ENCODE measurements at regions of chr11 and their contacts with region 1.

Region 1: DNA sequence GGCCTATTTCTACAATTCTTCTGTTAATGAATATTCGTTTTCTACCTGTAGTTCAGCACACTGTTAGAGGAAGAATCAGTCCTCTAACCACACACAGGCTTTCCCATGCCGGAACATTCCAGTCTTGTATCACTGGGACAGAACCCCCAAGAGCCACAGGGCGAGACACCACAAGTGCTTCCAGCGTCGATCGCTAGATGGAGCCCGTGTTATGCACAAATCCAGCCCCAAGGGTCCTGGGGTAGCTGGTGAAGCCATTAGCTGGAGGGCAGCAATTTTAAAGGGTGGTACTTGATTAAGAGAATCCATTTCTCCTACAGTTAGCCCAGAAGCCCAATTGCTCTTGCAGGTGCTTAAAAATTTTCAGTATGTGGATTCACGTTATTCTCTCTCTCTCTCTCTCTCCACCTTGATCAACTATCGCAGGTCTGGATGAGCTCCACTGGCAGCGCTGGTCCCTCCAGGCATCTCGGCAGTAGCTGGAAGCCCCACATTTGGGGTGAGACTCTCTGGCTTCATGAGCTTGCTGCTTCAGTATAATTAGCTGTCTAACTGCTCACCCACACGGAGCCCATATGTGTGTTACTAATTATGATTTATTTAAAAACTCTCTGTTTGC is 148.2 kb upstream of the SNX19 start:
- DNase-seq: peak; percentile 45
- ATAC-seq: peak; percentile 90
- H3K4me3 ChIP-seq: no peak overlapping the region
- H3K27ac ChIP-seq: no peak overlapping the region
- H3K4me1 ChIP-seq: no peaks in the 10 kb centered on the region
- H3K27me3 ChIP-seq: peaks cover 22% of the 10 kb centered on the region
- CTCF ChIP-seq: peak; percentile 95

Region 2: DNA sequence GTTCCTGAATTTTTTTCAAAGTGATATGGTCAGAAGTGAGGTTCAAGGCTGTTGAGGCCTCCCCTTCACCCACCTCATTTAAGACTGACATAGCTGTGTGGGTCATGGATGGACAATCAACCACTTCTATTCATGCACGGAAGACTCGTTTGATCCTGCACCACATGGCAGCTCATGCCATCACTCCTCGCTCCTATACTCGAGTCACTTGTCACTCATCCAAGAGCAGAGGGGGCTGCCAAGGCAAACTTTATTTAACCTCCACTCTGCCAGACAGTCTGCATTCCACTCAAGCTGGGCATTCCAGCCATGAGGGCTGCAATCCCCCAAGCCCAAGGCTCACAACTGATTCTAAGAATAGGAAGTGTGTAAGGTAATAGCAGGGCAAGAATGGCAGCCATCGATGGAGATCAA is 182.3 kb before region 1 on chr11:
- CTCF ChIA-PET with region 1: no interaction called
- POLR2A ChIA-PET with region 1: no interaction called
- in situ Hi-C with region 1: no loop called
- intact Hi-C with region 1: no loop called
- DNase-seq: no peak
- ATAC-seq: no peak
- H3K4me3 ChIP-seq: no peak overlapping the region
- H3K27ac ChIP-seq: no peak overlapping the region
- H3K4me1 ChIP-seq: no peaks in the 10 kb centered on the region
- H3K27me3 ChIP-seq: no peaks in the 10 kb centered on the region
- CTCF ChIP-seq: no peak

Region 3: GRCh38 chr11:131217313-131218310 is 153.1 kb after region 1 on chr11:
- CTCF ChIA-PET with region 1: no interaction called
- POLR2A ChIA-PET with region 1: no interaction called
- in situ Hi-C with region 1: no loop called
- intact Hi-C with region 1: loop called (anchors 10 kb)
- DNase-seq: no peak
- ATAC-seq: no peak
- H3K4me3 ChIP-seq: no peak overlapping the region
- H3K27ac ChIP-seq: no peak overlapping the region
- H3K4me1 ChIP-seq: no peaks in the 10 kb centered on the region
- H3K27me3 ChIP-seq: peaks cover 6% of the 10 kb centered on the region; the same call in 1 of the 2 replicates
- CTCF ChIP-seq: peak; percentile 47

Region 4: DNA sequence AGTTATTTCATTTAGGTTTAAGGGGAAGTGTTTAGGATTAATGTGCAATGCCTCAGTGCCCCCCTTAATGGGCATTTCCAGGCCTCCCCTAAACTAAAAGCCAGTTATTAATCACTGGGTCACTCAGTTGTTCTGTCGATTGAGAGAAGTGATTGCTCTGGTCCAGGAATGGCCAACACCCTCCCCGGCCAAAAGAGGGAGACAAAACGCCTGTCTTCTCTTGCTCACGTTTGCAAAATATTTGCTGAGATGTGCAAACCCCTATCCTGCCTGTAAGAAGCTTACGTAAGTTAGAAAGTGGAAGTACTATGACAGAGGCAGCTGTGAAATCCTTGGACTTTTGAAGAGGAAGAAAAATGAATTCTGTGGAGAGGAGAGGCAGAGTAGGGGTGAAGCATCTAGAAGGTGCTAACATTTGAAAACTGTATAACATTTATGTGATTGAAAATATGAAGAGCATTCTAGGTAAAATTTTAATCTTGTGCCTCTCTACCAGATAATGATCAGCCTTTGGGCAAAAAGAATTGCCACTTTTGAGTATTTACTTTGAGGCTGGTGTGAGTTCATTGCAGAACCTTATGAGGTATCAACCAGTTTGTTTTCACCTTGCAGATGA is 343.7 kb after region 1 on chr11:
- CTCF ChIA-PET with region 1: no interaction called
- POLR2A ChIA-PET with region 1: no interaction called
- in situ Hi-C with region 1: no loop called
- intact Hi-C with region 1: loop called (anchors 10 kb)
- DNase-seq: peak; percentile 20
- ATAC-seq: peak; percentile 78
- H3K4me3 ChIP-seq: no peak overlapping the region
- H3K27ac ChIP-seq: no peak overlapping the region
- H3K4me1 ChIP-seq: no peaks in the 10 kb centered on the region
- H3K27me3 ChIP-seq: peaks cover 6% of the 10 kb centered on the region
- CTCF ChIP-seq: peak; percentile 81

Region 5: GRCh38 chr11:131511794-131512193 is 447.3 kb after region 1 on chr11:
- CTCF ChIA-PET with region 1: no interaction called
- POLR2A ChIA-PET with region 1: no interaction called
- in situ Hi-C with region 1: no loop called
- intact Hi-C with region 1: loop called (anchors 1 kb)
- DNase-seq: peak; percentile 2
- ATAC-seq: no peak; the same call in 1 of the 2 replicates
- H3K4me3 ChIP-seq: no peak overlapping the region
- H3K27ac ChIP-seq: no peak overlapping the region
- H3K4me1 ChIP-seq: no peaks in the 10 kb centered on the region
- H3K27me3 ChIP-seq: no peaks in the 10 kb centered on the region
- CTCF ChIP-seq: peak; percentile 77

Region 6: GRCh38 chr11:131674051-131674755 is 609.7 kb after region 1 on chr11:
- CTCF ChIA-PET with region 1: interaction called, 8 read pairs
- POLR2A ChIA-PET with region 1: no interaction called
- in situ Hi-C with region 1: no loop called
- intact Hi-C with region 1: loop called (anchors 1 kb)
- DNase-seq: peak; percentile 47
- ATAC-seq: peak; percentile 92
- H3K4me3 ChIP-seq: no peak overlapping the region
- H3K27ac ChIP-seq: no peak overlapping the region
- H3K4me1 ChIP-seq: no peaks in the 10 kb centered on the region
- H3K27me3 ChIP-seq: peaks cover 11% of the 10 kb centered on the region
- CTCF ChIP-seq: peak; percentile 99

Measured in Panc1 (cell line).